ENCODE measurements at regions of chr6 and their contacts with region 1.

Region 1: DNA sequence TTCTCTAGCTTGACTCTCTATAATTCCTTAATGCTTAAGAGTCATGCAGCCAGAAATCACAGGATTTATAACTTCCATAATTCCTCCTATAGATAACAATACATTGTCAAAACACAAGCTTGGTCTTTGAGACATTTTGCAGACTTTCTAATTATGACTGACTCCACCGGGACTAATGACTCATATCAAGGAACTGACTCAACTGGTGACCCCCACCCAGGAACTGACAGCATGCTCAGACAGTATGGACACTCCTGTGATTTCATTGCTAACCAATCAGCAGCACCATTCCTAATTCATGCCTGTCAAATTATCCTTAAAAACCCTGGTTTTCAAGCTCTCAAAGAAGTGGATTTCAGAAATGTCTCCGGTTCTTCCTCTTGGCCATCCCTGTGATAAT is 670.5 kb upstream of the IMPG1 start:
- DNase-seq: no peak
- H3K4me3 ChIP-seq: no peak overlapping the region
- CTCF ChIP-seq: no peak
- POLR2A ChIP-seq: no peak

Region 2: DNA sequence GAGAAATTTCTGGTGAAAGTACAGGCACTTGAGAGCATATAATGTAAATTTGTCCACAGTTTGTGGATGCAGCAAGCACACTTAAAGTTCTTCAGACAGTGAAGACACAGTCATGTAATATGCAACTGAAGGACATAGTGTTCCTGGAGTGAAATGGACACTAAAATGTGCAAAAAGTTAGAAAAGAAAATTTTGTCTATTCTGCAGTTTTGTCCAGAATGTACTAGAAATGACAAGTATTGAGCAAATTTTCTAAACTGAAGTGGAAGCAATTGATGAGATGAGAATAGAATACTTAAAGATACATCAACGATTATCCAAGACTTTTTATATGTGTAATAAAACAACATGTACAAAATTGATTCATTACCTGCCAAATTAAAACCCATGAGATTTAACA is 23.5 kb before region 1 on chr6:
- intact Hi-C with region 1: loop called (anchors 1 kb)
- DNase-seq: no peak
- H3K4me3 ChIP-seq: no peak overlapping the region
- CTCF ChIP-seq: no peak
- POLR2A ChIP-seq: no peak

Region 3: GRCh38 chr6:76861403-76861802 is 118.5 kb after region 1 on chr6:
- intact Hi-C with region 1: no loop called
- DNase-seq: no peak
- H3K4me3 ChIP-seq: no peak overlapping the region
- CTCF ChIP-seq: no peak
- POLR2A ChIP-seq: no peak

Measured in lower leg skin (tissue), 4 donors.